ENCODE measurements at regions of chr2 and their contacts with region 1.

Region 1: GRCh38 chr2:8312861-8313830 is 368.7 kb upstream of the ID2 start:
- DNase-seq: no peak
- ATAC-seq: peak; percentile 62 to 77 (median 71)
- H3K4me3 ChIP-seq: no peak overlapping the region
- H3K27ac ChIP-seq: peak overlapping the region in 2 of 3 donors; percentile 26 to 41
- H3K4me1 ChIP-seq: peaks cover 0 to 14% (median 4%) of the 10 kb centered on the region in 4 donors
- H3K27me3 ChIP-seq: no peaks in the 10 kb centered on the region
- CTCF ChIP-seq: no peak
- POLR2A ChIP-seq: no peak

Region 2: GRCh38 chr2:8174641-8175257 is 138.4 kb before region 1 on chr2:
- intact Hi-C with region 1: no loop called
- DNase-seq: no peak
- ATAC-seq: no peak
- H3K4me3 ChIP-seq: no peak overlapping the region
- H3K27ac ChIP-seq: no peak overlapping the region
- H3K4me1 ChIP-seq: no peaks in the 10 kb centered on the region
- H3K27me3 ChIP-seq: no peaks in the 10 kb centered on the region
- CTCF ChIP-seq: no peak
- POLR2A ChIP-seq: no peak

Region 3: DNA sequence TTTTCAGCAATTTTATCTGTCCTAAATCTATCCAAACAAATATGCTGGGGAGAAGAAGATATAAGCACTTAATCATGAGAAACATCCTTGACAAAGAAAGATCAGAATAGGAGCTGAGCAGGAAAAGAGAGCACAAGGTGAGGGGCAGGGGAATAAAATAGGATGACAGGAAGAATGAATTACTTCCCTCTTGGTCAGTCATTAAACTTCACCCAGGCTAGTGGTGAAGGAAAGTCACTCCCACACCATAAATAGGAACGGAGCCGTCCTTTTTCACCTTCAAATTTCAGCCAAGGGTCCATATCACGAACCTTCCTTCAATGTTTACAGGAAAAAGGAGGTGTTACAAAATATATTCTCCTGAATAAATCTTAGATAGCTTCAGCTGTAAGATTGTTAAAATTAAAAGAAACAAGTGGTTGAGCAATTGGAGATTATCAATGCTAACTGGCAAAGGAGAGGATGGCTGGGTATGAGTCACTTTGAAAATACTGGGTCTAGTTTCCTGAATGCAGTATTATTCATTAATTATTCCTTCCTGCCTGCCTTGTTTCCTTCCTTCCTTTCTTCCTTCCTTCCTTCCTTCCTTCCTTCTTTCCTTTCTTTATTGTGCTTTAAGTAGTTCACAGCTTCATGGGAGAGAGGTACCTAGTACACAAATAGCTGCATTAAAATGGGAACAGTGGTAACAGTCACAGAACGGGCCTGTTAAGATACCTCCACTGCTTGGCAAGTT is 76.4 kb after region 1 on chr2:
- intact Hi-C with region 1: loop called in 1 of 2 experiments (anchors 10 kb)
- DNase-seq: no peak
- ATAC-seq: peak in 2 of 4 donors; percentile 37 to 73
- H3K4me3 ChIP-seq: no peak overlapping the region
- H3K27ac ChIP-seq: peak overlapping the region in 2 of 3 donors; percentile 25 to 26
- H3K4me1 ChIP-seq: peaks cover 0 to 24% (median 2%) of the 10 kb centered on the region in 4 donors
- H3K27me3 ChIP-seq: no peaks in the 10 kb centered on the region
- CTCF ChIP-seq: no peak
- POLR2A ChIP-seq: no peak